PC-3 (cell line): ENCODE measurements at regions of chr2 and their contacts with region 1.

Region 1: GRCh38 chr2:220847551-220848005 is 724.5 kb downstream of the EPHA4 start:
- DNase-seq: peak; percentile 85
- ATAC-seq: peak; percentile 94
- H3K4me3 ChIP-seq: peak overlapping the region; percentile 31; the same call in 1 of the 2 replicates
- H3K27ac ChIP-seq: peak overlapping the region; percentile 67
- H3K4me1 ChIP-seq: peaks cover 17% of the 10 kb centered on the region
- H3K27me3 ChIP-seq: no peaks in the 10 kb centered on the region
- CTCF ChIP-seq: no peak

Region 2: DNA sequence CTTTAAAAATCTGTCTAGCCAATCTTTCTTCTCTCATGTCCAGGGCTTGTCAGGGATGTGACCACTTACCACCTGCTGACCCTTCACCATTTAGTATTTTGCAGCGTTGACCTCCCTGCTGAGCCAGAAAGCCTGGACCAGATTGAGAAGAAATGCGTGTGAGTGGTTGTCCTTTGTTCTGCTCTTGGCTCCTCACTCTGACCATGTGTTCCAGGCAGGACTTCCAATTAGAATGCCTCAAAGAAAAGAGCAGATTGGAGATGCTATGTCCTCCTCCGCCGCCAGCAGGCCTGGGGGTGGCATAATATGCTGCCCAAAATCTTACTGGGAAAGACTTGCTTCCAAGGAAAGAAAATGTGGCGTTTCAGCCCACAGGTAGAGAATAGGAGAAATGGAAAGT is 326.0 kb before region 1 on chr2:
- CTCF ChIA-PET with region 1: no interaction called
- POLR2A ChIA-PET with region 1: no interaction called
- intact Hi-C with region 1: no loop called
- DNase-seq: no peak
- ATAC-seq: no peak
- H3K4me3 ChIP-seq: no peak overlapping the region
- H3K27ac ChIP-seq: no peak overlapping the region
- H3K4me1 ChIP-seq: no peaks in the 10 kb centered on the region
- H3K27me3 ChIP-seq: no peaks in the 10 kb centered on the region
- CTCF ChIP-seq: no peak

Region 3: GRCh38 chr2:220695397-220696279 is 151.9 kb before region 1 on chr2:
- CTCF ChIA-PET with region 1: no interaction called
- POLR2A ChIA-PET with region 1: no interaction called
- intact Hi-C with region 1: loop called (anchors 10 kb)
- DNase-seq: no peak
- ATAC-seq: no peak
- H3K4me3 ChIP-seq: no peak overlapping the region
- H3K27ac ChIP-seq: no peak overlapping the region
- H3K4me1 ChIP-seq: peaks cover 10% of the 10 kb centered on the region
- H3K27me3 ChIP-seq: no peaks in the 10 kb centered on the region
- CTCF ChIP-seq: no peak